SK-N-SH (cell line): ENCODE measurements at regions of chr17 and their contacts with region 1.

Region 1: GRCh38 chr17:34361478-34362061 is 1.5 kb downstream of the CCL1 start:
- DNase-seq: peak; percentile 82
- H3K4me3 ChIP-seq: no peak overlapping the region; a peak in 1 of 4 replicates
- H3K27ac ChIP-seq: no peak overlapping the region
- H3K4me1 ChIP-seq: no peaks in the 10 kb centered on the region
- H3K27me3 ChIP-seq: no peaks in the 10 kb centered on the region; the same call in 1 of the 2 replicates
- CTCF ChIP-seq: peak; percentile 100
- EP300 ChIP-seq: no peak
- RAD21 ChIP-seq: peak; percentile 100

Region 2: DNA sequence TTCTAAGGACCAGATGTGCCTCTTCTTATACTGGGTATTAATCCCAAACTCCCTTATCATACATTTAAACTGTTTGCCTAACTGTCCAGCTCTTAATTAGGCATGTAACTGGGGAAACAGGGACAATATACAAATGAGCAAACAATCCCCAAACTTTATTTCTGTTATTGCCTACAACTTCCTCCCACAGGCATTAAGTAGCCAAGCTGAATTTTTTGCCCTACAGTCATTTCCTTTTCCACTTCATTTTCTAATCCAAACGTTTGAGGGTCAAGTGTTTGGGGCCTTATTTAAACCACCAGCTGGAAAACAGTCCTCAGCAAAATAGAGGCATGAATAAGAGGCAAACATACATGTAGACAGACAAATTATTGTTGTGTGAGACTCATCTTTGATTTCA is 183.9 kb before region 1 on chr17:
- CTCF ChIA-PET with region 1: interaction called, 105 read pairs
- POLR2A ChIA-PET with region 1: no interaction called
- DNase-seq: no peak
- H3K4me3 ChIP-seq: no peak overlapping the region
- H3K27ac ChIP-seq: no peak overlapping the region
- H3K4me1 ChIP-seq: peaks cover 0 to 6% of the 10 kb centered on the region in 2 experiments; a peak in 1 of 4 replicates
- H3K27me3 ChIP-seq: no peaks in the 10 kb centered on the region
- CTCF ChIP-seq: no peak
- EP300 ChIP-seq: no peak
- RAD21 ChIP-seq: no peak

Region 3: DNA sequence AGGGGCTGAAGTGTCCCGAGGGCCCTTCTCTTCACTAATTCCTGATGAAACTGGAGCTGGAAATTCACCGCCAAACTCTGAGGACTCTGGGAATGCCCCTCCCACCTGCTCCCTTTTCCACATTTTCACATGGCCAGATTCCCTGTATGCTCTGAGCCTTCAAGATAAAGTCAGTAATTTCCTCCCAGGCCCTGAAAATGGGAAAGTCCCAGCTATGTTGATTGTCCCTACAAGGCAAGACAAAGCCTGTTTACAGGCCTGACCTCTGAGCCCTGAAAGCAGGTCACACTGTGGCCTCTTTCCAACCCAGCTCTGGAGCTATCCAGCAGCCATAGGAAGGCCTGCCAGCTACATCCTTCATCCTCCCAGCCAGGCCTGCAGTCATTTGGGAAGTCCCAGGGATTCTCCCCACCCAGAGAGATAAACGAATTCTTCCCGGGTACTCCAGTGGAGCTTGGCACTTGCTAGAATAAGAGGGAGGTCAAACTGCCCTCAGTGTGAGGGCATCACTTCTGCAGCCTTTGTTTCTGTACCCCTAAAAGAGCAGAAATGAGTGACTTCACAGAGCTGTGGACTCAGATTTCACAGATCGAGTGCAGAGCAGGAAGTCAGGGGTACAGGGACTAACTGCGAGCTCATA is 126.1 kb before region 1 on chr17:
- CTCF ChIA-PET with region 1: interaction called, 20 read pairs
- POLR2A ChIA-PET with region 1: no interaction called
- DNase-seq: no peak
- H3K4me3 ChIP-seq: no peak overlapping the region
- H3K27ac ChIP-seq: no peak overlapping the region
- H3K4me1 ChIP-seq: peaks cover 17 to 22% of the 10 kb centered on the region in 2 experiments; a peak in 3 of 4 replicates
- H3K27me3 ChIP-seq: no peaks in the 10 kb centered on the region
- CTCF ChIP-seq: no peak
- EP300 ChIP-seq: 0 out of 4 replicates have a peak, but pooled peaks of 1 of the 2 experiments have one; percentile 17
- RAD21 ChIP-seq: no peak

Region 4: GRCh38 chr17:34275881-34276280 is 85.7 kb before region 1 on chr17:
- CTCF ChIA-PET with region 1: interaction called, 19 read pairs
- POLR2A ChIA-PET with region 1: no interaction called
- DNase-seq: no peak
- H3K4me3 ChIP-seq: no peak overlapping the region
- H3K27ac ChIP-seq: peak overlapping the region in 1 of 2 experiments; percentile 23; a peak in 1 of 4 replicates
- H3K4me1 ChIP-seq: no peaks in the 10 kb centered on the region
- H3K27me3 ChIP-seq: no peaks in the 10 kb centered on the region; the same call in 1 of the 2 replicates
- CTCF ChIP-seq: no peak
- EP300 ChIP-seq: peak in 1 of 2 experiments; percentile 50; a peak in 1 of 4 replicates
- RAD21 ChIP-seq: no peak

Region 5: GRCh38 chr17:34318474-34318873 is 43.1 kb before region 1 on chr17:
- CTCF ChIA-PET with region 1: interaction called, 20 read pairs
- POLR2A ChIA-PET with region 1: no interaction called
- DNase-seq: no peak
- H3K4me3 ChIP-seq: no peak overlapping the region
- H3K27ac ChIP-seq: no peak overlapping the region
- H3K4me1 ChIP-seq: no peaks in the 10 kb centered on the region
- H3K27me3 ChIP-seq: no peaks in the 10 kb centered on the region
- CTCF ChIP-seq: peak; percentile 12; the same call in 1 of the 2 replicates
- EP300 ChIP-seq: no peak
- RAD21 ChIP-seq: no peak

Region 6: GRCh38 chr17:34386697-34387550 is 25.4 kb after region 1 on chr17:
- CTCF ChIA-PET with region 1: interaction called, 38 read pairs
- POLR2A ChIA-PET with region 1: no interaction called
- DNase-seq: no peak
- H3K4me3 ChIP-seq: no peak overlapping the region
- H3K27ac ChIP-seq: no peak overlapping the region
- H3K4me1 ChIP-seq: peaks cover 0 to 3% of the 10 kb centered on the region in 2 experiments; a peak in 1 of 4 replicates
- H3K27me3 ChIP-seq: no peaks in the 10 kb centered on the region
- CTCF ChIP-seq: no peak
- EP300 ChIP-seq: no peak
- RAD21 ChIP-seq: no peak